PC-9 (cell line): ENCODE measurements at regions of chr3 and their contacts with region 1.

Region 1: DNA sequence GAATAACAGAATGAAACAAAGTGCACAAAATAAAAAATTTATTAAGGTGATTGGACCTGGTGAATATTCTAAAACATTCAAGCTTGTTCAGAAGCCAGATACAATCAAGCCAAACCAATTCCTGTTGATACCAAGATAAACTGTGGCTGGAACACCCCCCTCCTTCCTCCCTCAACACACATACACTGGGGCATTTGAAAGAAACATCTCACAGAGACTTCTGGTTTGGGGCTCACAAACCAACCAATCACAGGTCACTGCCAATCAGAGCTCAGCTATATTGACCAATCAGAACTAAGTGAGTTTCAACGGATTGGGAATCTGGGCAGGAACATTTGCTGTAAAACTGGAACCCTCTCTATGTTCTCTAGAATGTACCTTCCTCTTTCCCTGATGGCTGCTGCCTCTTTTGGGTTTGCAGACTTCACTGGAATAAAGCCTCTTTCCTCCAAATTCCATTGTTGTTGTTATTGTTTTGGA is 340.6 kb upstream of the GOLIM4 start:
- DNase-seq: no peak
- H3K4me3 ChIP-seq: no peak overlapping the region
- H3K27ac ChIP-seq: no peak overlapping the region
- H3K4me1 ChIP-seq: no peaks in the 10 kb centered on the region
- H3K27me3 ChIP-seq: no peaks in the 10 kb centered on the region
- CTCF ChIP-seq: no peak

Region 2: GRCh38 chr3:168398371-168399025 is 37.8 kb before region 1 on chr3:
- CTCF ChIA-PET with region 1: no interaction called
- POLR2A ChIA-PET with region 1: no interaction called
- intact Hi-C with region 1: loop called (anchors 2 kb)
- DNase-seq: no peak
- H3K4me3 ChIP-seq: no peak overlapping the region
- H3K27ac ChIP-seq: no peak overlapping the region
- H3K4me1 ChIP-seq: no peaks in the 10 kb centered on the region
- H3K27me3 ChIP-seq: no peaks in the 10 kb centered on the region
- CTCF ChIP-seq: no peak